Colonic mucosa (tissue), 4 donors: ENCODE measurements at regions of chr17 and their contacts with region 1.

Region 1: DNA sequence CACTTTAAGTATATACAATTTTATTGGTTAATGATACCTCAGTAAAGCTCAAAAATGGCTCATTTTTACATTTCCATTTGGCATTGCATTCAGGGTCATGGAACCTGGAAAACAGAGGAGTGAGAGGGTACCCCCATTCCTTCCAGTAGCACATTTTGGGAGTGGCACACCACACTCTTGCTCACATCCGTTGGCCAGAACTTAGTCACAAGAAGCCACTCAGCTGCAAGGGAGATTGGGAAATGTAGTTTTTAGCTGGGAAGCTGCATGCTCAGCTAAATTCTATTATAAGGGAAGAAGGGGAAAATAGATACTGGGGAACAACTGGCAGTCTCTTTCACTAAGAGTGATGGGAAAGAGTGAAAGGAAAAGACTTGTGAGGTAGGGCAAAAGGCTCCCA is 102.5 kb upstream of the TMEM97 start:
- DNase-seq: no peak
- H3K4me3 ChIP-seq: no peak overlapping the region
- H3K27ac ChIP-seq: no peak overlapping the region
- H3K4me1 ChIP-seq: no peaks in the 10 kb centered on the region
- H3K27me3 ChIP-seq: no peaks in the 10 kb centered on the region
- CTCF ChIP-seq: no peak

Region 2: GRCh38 chr17:27892866-27893769 is 323.4 kb before region 1 on chr17 and contains the start of gene LYRM9:
- intact Hi-C with region 1: loop called (anchors 10 kb)
- DNase-seq: peak; percentile 92
- H3K4me3 ChIP-seq: peak within 1 kb of the TSS; percentile 75
- H3K27ac ChIP-seq: peak within 1 kb of the TSS; percentile 78
- H3K4me1 ChIP-seq: no peaks in the 10 kb centered on the region
- H3K27me3 ChIP-seq: no peaks in the 10 kb centered on the region
- CTCF ChIP-seq: peak; percentile 74
- total RNA-seq, gene LYRM9: 2.7 to 2.9 TPM

Region 3: GRCh38 chr17:28086519-28086918 is 130.0 kb before region 1 on chr17:
- intact Hi-C with region 1: no loop called
- DNase-seq: no peak
- H3K4me3 ChIP-seq: no peak overlapping the region
- H3K27ac ChIP-seq: no peak overlapping the region
- H3K4me1 ChIP-seq: peaks cover 11% of the 10 kb centered on the region
- H3K27me3 ChIP-seq: no peaks in the 10 kb centered on the region
- CTCF ChIP-seq: no peak

Region 4: DNA sequence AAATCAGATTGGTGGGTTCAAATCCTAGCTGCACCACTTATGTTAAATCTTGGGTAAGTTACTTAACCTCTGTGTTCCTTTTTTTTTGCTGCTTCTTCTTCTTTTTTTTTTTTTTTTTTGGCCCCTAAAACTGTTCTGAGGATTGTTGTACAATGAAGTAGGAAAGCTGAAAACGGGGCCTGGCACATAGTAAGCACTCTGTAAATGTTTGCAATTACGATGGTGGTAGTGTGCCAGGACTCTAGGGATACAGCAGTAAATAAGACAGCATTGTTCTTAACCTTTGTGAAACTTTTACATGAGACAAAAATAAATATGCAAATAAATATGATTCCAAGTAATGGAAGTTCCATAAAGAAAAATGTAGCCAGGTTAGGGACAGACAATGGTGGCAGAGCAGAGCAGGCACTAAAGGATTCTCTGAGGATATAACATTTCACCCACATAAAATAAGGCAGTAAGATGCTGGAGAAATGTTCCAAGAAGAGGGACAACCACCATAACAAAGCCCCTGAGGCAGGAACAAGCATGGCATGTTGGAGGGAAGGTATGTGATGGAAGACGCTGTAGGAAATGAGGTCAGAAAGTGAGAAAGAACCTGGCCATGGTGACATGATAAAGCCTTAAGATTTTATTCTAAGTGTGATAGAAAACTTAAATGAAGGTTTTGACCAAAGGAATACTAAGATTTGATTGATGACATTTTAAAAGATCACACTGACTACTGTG is 46.7 kb before region 1 on chr17:
- intact Hi-C with region 1: no loop called
- DNase-seq: no peak
- H3K4me3 ChIP-seq: no peak overlapping the region
- H3K27ac ChIP-seq: no peak overlapping the region
- H3K4me1 ChIP-seq: no peaks in the 10 kb centered on the region
- H3K27me3 ChIP-seq: no peaks in the 10 kb centered on the region
- CTCF ChIP-seq: no peak

Region 5: DNA sequence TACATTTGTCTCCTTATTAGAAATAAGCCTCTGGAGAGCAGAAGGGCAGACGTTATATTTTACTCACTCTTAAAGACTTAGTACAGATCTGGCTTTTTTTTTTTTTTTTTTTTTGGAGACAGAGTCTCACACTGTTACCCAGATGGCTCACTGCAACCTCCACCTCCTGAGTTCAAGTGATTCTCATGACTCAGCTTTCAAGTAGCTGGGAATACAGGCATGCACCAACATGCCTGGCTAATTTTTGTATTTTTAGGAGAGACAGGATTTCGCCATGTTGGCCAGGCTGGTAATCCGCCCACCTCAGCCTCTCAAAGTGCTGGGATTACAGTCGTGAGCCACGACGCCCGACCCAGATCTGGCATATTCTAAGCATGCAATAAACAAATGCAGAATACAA is 66.1 kb after region 1 on chr17:
- intact Hi-C with region 1: no loop called
- DNase-seq: no peak
- H3K4me3 ChIP-seq: no peak overlapping the region
- H3K27ac ChIP-seq: no peak overlapping the region
- H3K4me1 ChIP-seq: no peaks in the 10 kb centered on the region
- H3K27me3 ChIP-seq: no peaks in the 10 kb centered on the region
- CTCF ChIP-seq: no peak